Natural killer cell (primary cell): ENCODE measurements at regions of chr10 and their contacts with region 1.

Region 1: GRCh38 chr10:29304264-29305030 is 15.6 kb downstream of the LYZL1 start:
- DNase-seq: peak in 1 of 2 donors; percentile 53
- ATAC-seq: no peak
- H3K4me3 ChIP-seq: no peak overlapping the region
- H3K4me3 Mint-ChIP-seq: no peak overlapping the region
- H3K27ac ChIP-seq: no peak overlapping the region
- H3K27ac Mint-ChIP-seq: no peak overlapping the region
- H3K4me1 ChIP-seq: no peaks in the 10 kb centered on the region
- H3K4me1 Mint-ChIP-seq: peaks cover 0 to 4% of the 10 kb centered on the region in 2 donors
- H3K27me3 ChIP-seq: no peaks in the 10 kb centered on the region
- H3K27me3 Mint-ChIP-seq: peaks cover 18 to 26% of the 10 kb centered on the region in 2 donors
- CTCF ChIP-seq: no peak

Region 2: DNA sequence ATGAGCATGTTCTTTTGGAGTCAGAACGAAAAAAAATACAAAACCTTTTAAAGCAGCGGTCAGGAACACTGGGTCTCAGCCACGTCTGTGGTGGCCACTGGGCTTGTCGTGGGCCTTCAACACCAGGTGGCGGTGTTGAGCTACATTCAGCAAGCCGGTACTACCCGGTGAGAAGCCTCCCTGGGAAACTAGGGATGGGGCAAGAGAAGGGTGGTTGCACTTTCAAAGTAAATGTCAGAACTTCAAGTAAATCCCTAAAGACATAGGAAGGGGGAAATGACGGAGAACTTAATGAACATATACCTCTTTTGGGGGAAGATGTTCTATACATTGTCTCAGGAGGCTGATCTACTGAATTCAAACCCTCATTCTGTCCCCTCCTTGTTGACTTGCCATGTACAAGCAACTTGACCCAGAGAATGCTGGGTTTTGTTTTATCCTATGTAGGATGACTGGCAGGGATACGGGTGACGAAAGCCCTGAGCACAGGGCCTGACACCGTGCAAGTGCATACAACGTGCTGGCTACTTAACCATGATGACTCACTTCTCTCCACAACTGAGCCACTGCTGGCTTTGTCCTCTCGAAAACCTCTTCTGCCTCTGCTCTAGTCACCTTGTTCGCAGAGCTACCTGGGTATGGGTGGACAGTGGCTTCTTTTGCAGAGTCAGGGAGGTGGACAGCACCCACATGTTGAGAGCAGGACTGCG is 676.1 kb before region 1 on chr10:
- intact Hi-C with region 1: loop called (anchors 10 kb)
- DNase-seq: peak; percentile 56 to 83
- ATAC-seq: peak; percentile 85 to 93 (median 90)
- H3K4me3 ChIP-seq: no peak overlapping the region
- H3K4me3 Mint-ChIP-seq: no peak overlapping the region
- H3K27ac ChIP-seq: no peak overlapping the region
- H3K27ac Mint-ChIP-seq: no peak overlapping the region
- H3K4me1 ChIP-seq: no peaks in the 10 kb centered on the region
- H3K4me1 Mint-ChIP-seq: peaks cover 12 to 23% of the 10 kb centered on the region in 2 donors
- H3K27me3 ChIP-seq: no peaks in the 10 kb centered on the region
- H3K27me3 Mint-ChIP-seq: peaks cover 14 to 17% of the 10 kb centered on the region in 2 donors
- CTCF ChIP-seq: peak; percentile 93

Region 3: DNA sequence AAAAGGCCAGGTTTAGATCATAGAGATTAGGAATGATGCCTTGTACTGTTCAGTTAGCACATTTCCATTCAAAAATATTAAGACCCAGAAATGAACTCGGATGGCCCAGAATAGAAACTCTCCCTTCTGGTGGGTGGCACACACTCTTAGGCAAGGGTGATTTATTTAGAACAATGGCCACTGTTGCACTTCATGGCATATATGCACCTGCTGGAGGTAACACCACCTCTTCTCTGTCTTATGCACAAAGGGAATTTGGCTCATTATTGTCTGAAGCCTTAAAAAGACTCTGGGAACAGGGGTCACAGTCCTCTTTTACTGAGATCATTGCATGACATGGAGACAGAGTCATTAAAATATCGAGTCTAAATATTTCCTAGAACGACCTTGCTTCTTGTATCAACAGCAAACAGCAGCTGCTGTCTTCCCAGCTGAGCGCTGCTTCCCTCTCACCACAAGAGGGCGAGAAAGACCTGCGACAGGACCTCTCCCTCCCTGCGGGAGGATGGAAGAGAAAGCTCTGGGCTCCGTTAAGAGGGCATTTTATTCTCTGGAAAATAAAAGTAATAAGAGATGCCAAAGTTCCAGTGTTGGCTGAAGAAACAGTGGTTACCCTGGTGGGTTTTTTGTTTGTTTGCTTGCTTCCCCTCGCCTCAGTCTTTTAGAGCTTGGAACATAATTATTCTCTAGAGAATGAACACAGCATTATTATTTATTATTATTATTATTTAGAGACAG is 640.7 kb before region 1 on chr10:
- intact Hi-C with region 1: loop called (anchors 5 kb)
- DNase-seq: peak; percentile 39 to 83
- ATAC-seq: peak; percentile 80 to 95 (median 94)
- H3K4me3 ChIP-seq: no peak overlapping the region
- H3K4me3 Mint-ChIP-seq: no peak overlapping the region
- H3K27ac ChIP-seq: no peak overlapping the region
- H3K27ac Mint-ChIP-seq: no peak overlapping the region
- H3K4me1 ChIP-seq: peaks cover 4% of the 10 kb centered on the region
- H3K4me1 Mint-ChIP-seq: peaks cover 0 to 12% of the 10 kb centered on the region in 2 donors
- H3K27me3 ChIP-seq: peaks cover 7% of the 10 kb centered on the region
- H3K27me3 Mint-ChIP-seq: peaks cover 37 to 44% of the 10 kb centered on the region in 2 donors
- CTCF ChIP-seq: peak; percentile 93

Region 4: DNA sequence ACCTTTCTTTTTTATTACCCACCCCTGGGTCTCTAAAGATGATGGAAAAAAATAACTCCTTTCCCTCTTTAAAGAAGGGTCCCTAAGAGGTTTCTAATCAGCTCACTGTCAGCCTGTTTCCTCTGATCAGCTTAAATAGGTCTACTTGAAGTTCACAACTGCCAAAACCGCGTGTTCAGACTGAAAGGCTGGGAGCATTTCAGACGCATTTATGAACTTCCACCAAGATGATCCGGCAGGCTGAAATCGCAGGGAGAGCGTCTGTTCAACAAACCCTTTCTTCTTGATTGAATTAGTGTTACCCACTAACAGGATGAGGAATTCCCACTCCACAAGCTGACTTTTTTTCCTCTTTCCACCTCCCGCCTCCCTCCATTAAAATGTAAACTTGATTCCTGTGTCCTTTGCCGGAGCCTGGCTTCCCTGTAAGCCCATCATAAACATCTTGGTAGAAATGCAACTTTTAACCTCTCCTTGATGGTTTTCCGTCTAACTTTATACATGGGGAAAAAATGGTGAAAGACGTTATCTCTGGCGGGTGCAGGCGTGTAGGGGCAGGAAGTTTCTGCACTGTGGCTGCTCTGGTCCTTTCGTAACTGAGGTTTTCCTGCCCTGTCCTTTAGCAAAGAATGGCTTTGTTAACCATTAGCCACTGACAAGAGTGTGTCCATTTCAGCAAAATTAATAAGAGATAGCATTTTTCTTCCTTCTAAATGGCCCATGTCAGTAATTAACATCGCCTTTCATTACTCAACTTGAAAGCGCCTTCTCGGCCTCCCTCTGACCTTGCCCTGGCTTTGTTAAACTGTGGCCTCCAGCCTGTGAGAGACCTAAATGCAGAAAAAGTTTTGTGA is 496.5 kb before region 1 on chr10:
- intact Hi-C with region 1: no loop called
- DNase-seq: no peak
- ATAC-seq: no peak
- H3K4me3 ChIP-seq: no peak overlapping the region
- H3K4me3 Mint-ChIP-seq: no peak overlapping the region
- H3K27ac ChIP-seq: no peak overlapping the region
- H3K27ac Mint-ChIP-seq: no peak overlapping the region
- H3K4me1 ChIP-seq: no peaks in the 10 kb centered on the region
- H3K4me1 Mint-ChIP-seq: peaks cover 0 to 5% of the 10 kb centered on the region in 2 donors
- H3K27me3 ChIP-seq: no peaks in the 10 kb centered on the region
- H3K27me3 Mint-ChIP-seq: peaks cover 10 to 16% of the 10 kb centered on the region in 2 donors
- CTCF ChIP-seq: no peak

Region 5: GRCh38 chr10:29120237-29120636 is 184.2 kb before region 1 on chr10:
- intact Hi-C with region 1: no loop called
- DNase-seq: no peak
- ATAC-seq: no peak
- H3K4me3 ChIP-seq: no peak overlapping the region
- H3K4me3 Mint-ChIP-seq: no peak overlapping the region
- H3K27ac ChIP-seq: no peak overlapping the region
- H3K27ac Mint-ChIP-seq: no peak overlapping the region
- H3K4me1 ChIP-seq: no peaks in the 10 kb centered on the region
- H3K4me1 Mint-ChIP-seq: no peaks in the 10 kb centered on the region
- H3K27me3 ChIP-seq: no peaks in the 10 kb centered on the region
- H3K27me3 Mint-ChIP-seq: peaks cover 0 to 2% of the 10 kb centered on the region in 2 donors
- CTCF ChIP-seq: no peak

Region 6: DNA sequence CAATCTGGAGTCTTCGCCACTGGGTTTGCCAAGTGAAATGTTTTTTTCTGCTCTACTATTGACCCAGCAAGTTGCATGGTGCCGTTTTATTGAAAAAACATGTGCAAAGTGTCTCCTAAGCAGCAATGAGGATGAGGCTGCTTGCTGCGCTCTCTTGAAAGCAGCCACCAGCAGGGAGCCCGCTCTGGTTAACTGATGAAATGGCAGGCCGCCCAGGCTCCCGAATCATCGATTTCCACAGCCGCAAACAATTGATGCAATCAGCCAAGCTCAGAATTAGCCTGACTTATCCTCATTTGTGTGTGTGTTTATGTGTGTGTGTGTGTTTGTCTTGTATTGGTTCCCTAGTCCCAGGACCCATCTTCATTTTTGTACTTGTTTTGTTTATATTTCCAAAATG is 37.8 kb before region 1 on chr10:
- intact Hi-C with region 1: no loop called
- DNase-seq: no peak
- ATAC-seq: no peak
- H3K4me3 ChIP-seq: no peak overlapping the region
- H3K4me3 Mint-ChIP-seq: no peak overlapping the region
- H3K27ac ChIP-seq: no peak overlapping the region
- H3K27ac Mint-ChIP-seq: no peak overlapping the region
- H3K4me1 ChIP-seq: no peaks in the 10 kb centered on the region
- H3K4me1 Mint-ChIP-seq: no peaks in the 10 kb centered on the region
- H3K27me3 ChIP-seq: no peaks in the 10 kb centered on the region
- H3K27me3 Mint-ChIP-seq: peaks cover 0 to 4% of the 10 kb centered on the region in 2 donors
- CTCF ChIP-seq: no peak

Region 7: GRCh38 chr10:29328983-29329382 is 24.5 kb after region 1 on chr10:
- intact Hi-C with region 1: loop called (anchors 1 kb)
- DNase-seq: no peak
- ATAC-seq: no peak
- H3K4me3 ChIP-seq: no peak overlapping the region
- H3K4me3 Mint-ChIP-seq: no peak overlapping the region
- H3K27ac ChIP-seq: no peak overlapping the region
- H3K27ac Mint-ChIP-seq: no peak overlapping the region
- H3K4me1 ChIP-seq: no peaks in the 10 kb centered on the region
- H3K4me1 Mint-ChIP-seq: no peaks in the 10 kb centered on the region
- H3K27me3 ChIP-seq: no peaks in the 10 kb centered on the region
- H3K27me3 Mint-ChIP-seq: peaks cover 0 to 4% of the 10 kb centered on the region in 2 donors
- CTCF ChIP-seq: no peak